HepG2 (cell line): ENCODE measurements at regions of chr17 and their contacts with region 1.

Region 1: GRCh38 chr17:48804925-48805411 is 12.1 kb downstream of the TTLL6 start:
- DNase-seq: peak; percentile 63
- ATAC-seq: peak; percentile 94
- H3K4me3 ChIP-seq: peak overlapping the region in 2 of 3 experiments; percentile 41 to 61; a peak in 4 of 6 replicates
- H3K27ac ChIP-seq: no peak overlapping the region
- H3K4me1 ChIP-seq: peaks cover 63% of the 10 kb centered on the region
- H3K27me3 ChIP-seq: peaks cover 0 to 6% of the 10 kb centered on the region in 2 experiments; a peak in 4 of 5 replicates
- CTCF ChIP-seq: peak; percentile 95
- EP300 ChIP-seq: no peak
- POLR2A ChIP-seq: no peak
- RAD21 ChIP-seq: peak; percentile 97

Region 2: GRCh38 chr17:48492401-48493298 is 312.3 kb before region 1 on chr17:
- CTCF ChIA-PET with region 1: no interaction called
- POLR2A ChIA-PET with region 1: no interaction called
- in situ Hi-C with region 1: no loop called
- intact Hi-C with region 1: no loop called
- DNase-seq: no peak
- ATAC-seq: peak; percentile 97
- H3K4me3 ChIP-seq: no peak overlapping the region; a peak in 1 of 6 replicates
- H3K27ac ChIP-seq: no peak overlapping the region
- H3K4me1 ChIP-seq: no peaks in the 10 kb centered on the region
- H3K27me3 ChIP-seq: peaks cover 7 to 54% of the 10 kb centered on the region in 2 experiments; a peak in 4 of 5 replicates
- CTCF ChIP-seq: peak; percentile 73
- EP300 ChIP-seq: no peak
- POLR2A ChIP-seq: no peak
- RAD21 ChIP-seq: peak; percentile 70

Region 3: GRCh38 chr17:48678141-48678971 is 126.6 kb before region 1 on chr17:
- CTCF ChIA-PET with region 1: interaction called, 3 read pairs
- POLR2A ChIA-PET with region 1: no interaction called
- in situ Hi-C with region 1: no loop called
- intact Hi-C with region 1: loop called (anchors 5 kb)
- DNase-seq: peak; percentile 48
- ATAC-seq: peak; percentile 98
- H3K4me3 ChIP-seq: peak overlapping the region in 1 of 3 experiments; percentile 51; a peak in 1 of 6 replicates
- H3K27ac ChIP-seq: no peak overlapping the region
- H3K4me1 ChIP-seq: 0 out of 2 replicates have a peak, but pooled peaks cover 9% of the 10 kb centered on the region
- H3K27me3 ChIP-seq: peaks cover 0 to 26% of the 10 kb centered on the region in 2 experiments; a peak in 3 of 5 replicates
- CTCF ChIP-seq: peak; percentile 98
- EP300 ChIP-seq: no peak
- POLR2A ChIP-seq: no peak
- RAD21 ChIP-seq: peak; percentile 94